ENCODE measurements at regions of chr19 and their contacts with region 1.

Region 1: DNA sequence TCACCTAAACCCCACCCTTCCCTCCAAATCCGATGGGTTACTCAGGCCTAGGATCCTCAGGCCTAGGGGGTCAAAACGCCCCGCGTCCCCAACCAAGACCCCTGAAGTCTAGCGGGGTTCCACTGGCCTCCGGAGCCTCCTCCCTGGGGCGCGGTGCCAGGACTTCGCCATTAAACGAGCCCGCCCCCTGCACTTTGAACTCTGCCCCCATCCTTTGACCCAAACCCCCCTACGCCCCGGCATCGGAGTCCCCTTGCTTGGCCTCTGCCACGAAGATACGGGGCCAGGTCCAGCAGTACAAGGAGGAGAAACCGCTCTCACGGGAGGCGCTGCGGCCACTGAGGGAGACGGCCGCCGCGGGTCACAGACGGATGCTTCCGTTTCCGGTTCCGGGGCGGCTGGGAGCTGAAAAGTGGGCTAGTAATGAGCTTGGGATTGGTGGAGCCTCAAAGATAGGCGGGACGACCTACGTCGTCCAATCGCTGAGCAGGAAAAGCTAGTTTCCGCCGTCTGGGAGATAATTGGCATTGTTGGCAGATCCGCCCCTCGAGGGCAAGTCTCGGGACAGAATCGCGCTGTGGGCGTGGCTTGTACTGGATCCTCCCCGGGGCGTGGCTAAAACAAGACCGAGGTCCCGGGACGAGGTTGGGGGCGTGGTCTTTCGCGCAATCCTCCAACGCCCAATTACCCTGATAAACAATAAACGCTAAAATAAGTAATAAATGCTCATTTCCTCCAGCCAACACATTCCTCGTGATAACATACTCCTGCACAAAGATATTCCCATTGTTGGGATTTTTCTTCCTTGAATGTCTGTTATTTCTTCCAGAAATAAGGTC is 5.7 kb upstream of the ZNF77 start:
- DNase-seq: peak; percentile 94
- H3K4me3 ChIP-seq: peak overlapping the region; percentile 73 to 90
- H3K27ac ChIP-seq: peak overlapping the region; percentile 79 to 96
- H3K4me1 ChIP-seq: peaks cover 4 to 9% of the 10 kb centered on the region in 2 experiments; a peak in 2 of 4 replicates
- H3K27me3 ChIP-seq: no peaks in the 10 kb centered on the region
- CTCF ChIP-seq: no peak
- EP300 ChIP-seq: no peak
- RAD21 ChIP-seq: no peak

Region 2: DNA sequence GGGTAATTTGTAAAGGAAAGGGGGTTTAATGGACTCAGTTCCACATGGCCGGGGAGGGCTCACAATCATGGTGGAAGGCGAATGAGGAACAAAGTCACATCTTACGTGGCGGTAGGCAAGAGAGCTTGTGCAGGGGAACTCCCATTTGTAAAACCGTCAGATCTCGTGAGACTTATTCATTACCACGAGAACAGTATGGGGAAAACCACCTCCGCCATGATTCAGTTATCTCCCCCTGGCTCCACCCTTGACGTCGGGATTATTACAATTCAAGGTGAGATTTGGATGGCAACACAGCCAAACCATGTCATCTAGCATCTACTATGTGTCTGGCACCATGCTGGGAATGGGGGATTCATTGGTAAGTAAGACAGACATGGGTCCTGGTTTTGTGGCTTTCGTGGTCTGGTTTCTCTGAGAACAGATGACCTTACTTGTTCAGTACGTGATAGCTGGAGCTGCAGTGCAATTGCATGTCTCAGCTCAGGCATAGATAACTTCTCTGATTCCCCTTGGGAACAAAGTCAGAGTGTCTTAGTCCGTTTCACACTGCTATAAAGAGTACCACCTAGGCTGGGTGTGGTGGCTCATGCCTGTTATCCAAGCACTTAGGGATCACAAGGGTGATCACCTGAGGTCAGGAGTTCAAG is 122.5 kb before region 1 on chr19:
- CTCF ChIA-PET with region 1: no interaction called
- POLR2A ChIA-PET with region 1: no interaction called
- DNase-seq: no peak
- H3K4me3 ChIP-seq: no peak overlapping the region
- H3K27ac ChIP-seq: no peak overlapping the region
- H3K4me1 ChIP-seq: no peaks in the 10 kb centered on the region
- H3K27me3 ChIP-seq: no peaks in the 10 kb centered on the region
- CTCF ChIP-seq: no peak
- EP300 ChIP-seq: no peak
- RAD21 ChIP-seq: no peak

Region 3: GRCh38 chr19:2887391-2887914 is 63.1 kb before region 1 on chr19:
- CTCF ChIA-PET with region 1: interaction called, 25 read pairs
- POLR2A ChIA-PET with region 1: interaction called, 8 read pairs
- DNase-seq: peak; percentile 78
- H3K4me3 ChIP-seq: no peak overlapping the region
- H3K27ac ChIP-seq: no peak overlapping the region
- H3K4me1 ChIP-seq: peaks cover 0 to 3% of the 10 kb centered on the region in 2 experiments; a peak in 1 of 4 replicates
- H3K27me3 ChIP-seq: no peaks in the 10 kb centered on the region
- CTCF ChIP-seq: peak; percentile 70
- EP300 ChIP-seq: no peak
- RAD21 ChIP-seq: peak; percentile 70

Region 4: DNA sequence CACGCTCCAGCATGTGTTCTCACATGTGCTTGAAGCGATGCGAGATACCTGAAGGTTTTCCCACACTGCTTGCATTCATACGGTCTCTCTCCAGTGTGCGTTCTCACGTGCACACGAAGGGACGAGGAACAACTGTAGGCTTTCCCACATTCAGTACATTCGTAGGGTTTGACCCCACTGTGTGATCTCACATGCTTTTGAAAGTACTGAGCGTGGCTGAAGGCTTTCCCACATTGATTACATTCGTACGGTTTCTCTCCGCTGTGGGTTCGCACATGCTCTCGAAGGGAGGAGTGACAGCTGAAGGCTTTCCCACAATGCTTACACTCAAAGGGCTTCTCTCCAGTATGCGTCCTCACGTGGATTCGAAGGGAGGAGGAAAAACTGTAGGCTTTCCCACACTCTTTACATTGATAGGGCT is 17.0 kb before region 1 on chr19:
- CTCF ChIA-PET with region 1: no interaction called
- POLR2A ChIA-PET with region 1: no interaction called
- DNase-seq: no peak
- H3K4me3 ChIP-seq: peak overlapping the region in 1 of 2 experiments; percentile 4; a peak in 1 of 4 replicates
- H3K27ac ChIP-seq: no peak overlapping the region
- H3K4me1 ChIP-seq: no peaks in the 10 kb centered on the region
- H3K27me3 ChIP-seq: no peaks in the 10 kb centered on the region
- CTCF ChIP-seq: no peak
- EP300 ChIP-seq: no peak
- RAD21 ChIP-seq: no peak

Region 5: DNA sequence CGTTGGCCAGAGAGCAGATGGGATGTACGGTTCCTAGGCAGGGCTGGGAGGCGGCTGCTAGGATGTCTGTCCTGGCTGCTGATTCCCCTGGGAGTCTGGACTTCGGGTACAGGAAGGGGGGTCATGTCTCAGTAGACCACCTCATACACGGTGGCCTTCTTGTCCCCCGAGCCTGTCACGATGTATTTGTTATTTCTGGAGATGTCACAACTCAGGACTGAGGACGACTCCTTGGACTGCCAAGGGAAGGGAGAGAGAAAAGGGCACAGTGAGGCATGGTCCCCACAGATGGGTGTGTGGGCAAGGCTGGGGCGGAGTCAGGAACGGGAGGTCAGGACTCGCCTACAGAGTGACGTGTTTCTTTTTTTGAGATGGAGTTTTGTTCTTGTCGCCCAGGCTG is 47.2 kb after region 1 on chr19:
- CTCF ChIA-PET with region 1: no interaction called
- POLR2A ChIA-PET with region 1: no interaction called
- DNase-seq: no peak
- H3K4me3 ChIP-seq: no peak overlapping the region
- H3K27ac ChIP-seq: no peak overlapping the region
- H3K4me1 ChIP-seq: no peaks in the 10 kb centered on the region; a peak in 1 of 4 replicates
- H3K27me3 ChIP-seq: no peaks in the 10 kb centered on the region
- CTCF ChIP-seq: no peak
- EP300 ChIP-seq: no peak
- RAD21 ChIP-seq: no peak

Region 6: DNA sequence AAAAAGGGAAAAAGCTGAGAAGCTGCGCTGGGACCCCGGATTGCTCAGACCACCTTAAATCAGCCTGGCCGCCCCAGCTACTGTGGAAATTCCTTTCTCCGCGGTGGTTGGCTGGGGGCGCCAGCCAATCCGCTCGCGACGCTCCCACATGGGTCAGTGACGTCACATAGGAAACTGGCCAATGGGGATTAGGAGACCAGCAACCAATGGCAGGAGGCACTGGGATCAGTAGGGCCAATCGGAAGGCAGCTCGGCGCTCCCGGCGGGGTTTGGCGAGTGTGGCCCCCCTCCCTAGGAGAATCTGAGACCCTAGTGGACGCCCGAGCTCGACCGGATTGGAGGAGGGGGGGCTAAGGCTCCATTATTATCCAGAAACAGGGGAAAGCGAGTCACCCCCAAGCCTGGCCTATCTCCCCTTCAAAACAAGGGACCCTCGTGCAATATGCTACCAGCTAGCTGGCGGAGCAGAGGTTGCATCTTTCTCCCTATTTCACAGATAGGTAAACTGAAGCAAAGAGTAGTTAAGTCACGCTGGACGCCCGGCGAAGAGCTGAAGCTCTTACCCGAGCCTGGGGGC is 85.1 kb after region 1 on chr19:
- CTCF ChIA-PET with region 1: interaction called, 13 read pairs
- POLR2A ChIA-PET with region 1: interaction called, 4 read pairs
- DNase-seq: peak; percentile 98
- H3K4me3 ChIP-seq: peak overlapping the region; percentile 49 to 69
- H3K27ac ChIP-seq: peak overlapping the region; percentile 74 to 83
- H3K4me1 ChIP-seq: peaks cover 0 to 14% of the 10 kb centered on the region in 2 experiments; a peak in 1 of 4 replicates
- H3K27me3 ChIP-seq: peaks cover 31% of the 10 kb centered on the region
- CTCF ChIP-seq: no peak
- EP300 ChIP-seq: peak; percentile 22 to 25; a peak in 1 of 4 replicates
- RAD21 ChIP-seq: no peak

Region 7: DNA sequence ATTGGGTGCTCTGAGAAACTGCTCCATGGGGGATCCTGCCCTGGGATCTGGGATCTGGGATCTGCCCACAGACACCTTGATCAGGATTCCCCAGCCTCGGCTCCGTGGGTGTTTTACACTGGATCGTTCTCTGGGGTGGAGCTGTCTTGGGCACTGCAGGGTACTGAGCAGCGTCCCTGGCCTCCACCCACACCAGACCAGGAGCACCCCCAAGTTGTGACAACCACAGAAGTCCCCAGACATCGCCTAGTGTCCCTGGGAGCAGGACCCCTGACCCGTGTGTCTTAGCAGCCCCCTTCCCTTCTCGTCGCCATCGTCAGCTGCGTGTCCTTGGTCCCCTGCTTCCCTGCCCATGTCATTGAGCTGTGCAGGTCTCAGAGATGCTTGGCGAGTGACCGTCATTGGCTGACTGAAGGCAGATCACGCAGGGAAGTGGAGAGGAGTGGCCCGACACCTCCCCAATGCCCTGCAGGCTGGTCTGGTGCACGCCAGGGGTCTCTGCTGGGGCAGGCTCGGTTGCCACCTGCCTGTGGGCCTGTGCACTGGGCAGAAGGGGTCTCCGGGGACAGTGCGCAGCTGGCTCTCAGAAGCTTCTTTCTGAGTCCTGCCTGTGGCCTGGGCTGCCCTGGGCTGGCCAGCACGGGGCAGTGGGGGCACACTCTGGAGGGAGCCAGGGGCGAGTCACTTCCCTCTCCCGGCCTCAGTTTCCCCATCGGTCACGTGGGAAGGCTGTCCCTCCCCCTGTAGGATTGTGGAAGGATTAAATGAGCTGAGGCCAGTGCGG is 149.8 kb after region 1 on chr19:
- CTCF ChIA-PET with region 1: interaction called, 18 read pairs
- POLR2A ChIA-PET with region 1: interaction called, 3 read pairs
- DNase-seq: no peak
- H3K4me3 ChIP-seq: no peak overlapping the region
- H3K27ac ChIP-seq: no peak overlapping the region
- H3K4me1 ChIP-seq: peaks cover 0 to 23% of the 10 kb centered on the region in 2 experiments; a peak in 1 of 4 replicates
- H3K27me3 ChIP-seq: no peaks in the 10 kb centered on the region
- CTCF ChIP-seq: no peak
- EP300 ChIP-seq: no peak
- RAD21 ChIP-seq: no peak

Region 8: GRCh38 chr19:3125900-3126524 is 175.5 kb after region 1 on chr19:
- CTCF ChIA-PET with region 1: interaction called, 60 read pairs
- POLR2A ChIA-PET with region 1: interaction called, 3 read pairs
- DNase-seq: peak; percentile 87
- H3K4me3 ChIP-seq: peak overlapping the region in 1 of 2 experiments; percentile 6; a peak in 1 of 4 replicates
- H3K27ac ChIP-seq: no peak overlapping the region
- H3K4me1 ChIP-seq: no peaks in the 10 kb centered on the region
- H3K27me3 ChIP-seq: no peaks in the 10 kb centered on the region
- CTCF ChIP-seq: peak; percentile 84
- EP300 ChIP-seq: no peak
- RAD21 ChIP-seq: peak; percentile 47

Region 9: DNA sequence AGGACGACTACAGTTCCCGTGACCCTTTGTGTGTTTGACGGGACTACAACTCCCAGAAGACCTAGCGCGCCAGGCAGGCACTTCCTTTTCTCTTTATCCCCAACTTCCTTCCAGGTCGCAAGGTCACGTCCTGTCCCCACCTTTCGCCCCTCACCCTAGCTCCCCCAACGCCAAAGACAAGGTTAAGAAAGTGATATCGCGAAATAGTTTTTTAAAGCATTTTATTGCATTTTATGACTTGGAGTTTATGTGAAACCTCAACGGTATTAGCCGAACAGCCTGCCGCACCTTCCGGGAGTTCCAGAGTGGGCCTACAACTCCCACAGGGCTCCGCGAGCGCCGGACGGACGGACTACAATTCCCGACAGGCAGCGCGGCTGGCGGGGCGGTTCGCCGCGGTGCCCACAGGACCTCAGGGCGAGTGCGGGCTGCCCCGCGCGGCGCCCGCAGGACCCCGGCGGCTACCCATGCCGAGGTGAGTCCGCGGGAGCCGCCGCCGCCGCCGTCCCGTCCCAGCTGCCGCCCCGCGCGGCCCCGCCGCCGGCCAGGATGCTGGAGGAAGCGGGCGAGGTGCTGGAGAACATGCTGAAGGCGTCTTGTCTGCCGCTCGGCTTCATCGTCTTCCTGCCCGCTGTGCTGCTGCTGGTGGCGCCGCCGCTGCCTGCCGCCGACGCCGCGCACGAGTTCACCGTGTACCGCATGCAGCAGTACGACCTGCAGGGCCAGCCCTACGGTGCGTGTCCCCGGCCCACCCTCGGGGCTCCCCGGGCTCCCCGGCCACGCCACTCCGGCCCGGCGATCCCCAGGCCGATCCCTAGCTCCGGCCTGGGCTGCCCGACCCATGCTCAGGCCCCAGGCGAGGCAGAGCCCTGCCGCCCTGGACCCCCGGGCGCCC is 235.2 kb after region 1 on chr19 and contains the start of gene NCLN:
- CTCF ChIA-PET with region 1: interaction called, 15 read pairs
- POLR2A ChIA-PET with region 1: no interaction called
- DNase-seq: peak; percentile 96
- H3K4me3 ChIP-seq: peak within 1 kb of the TSS; percentile 67 to 91
- H3K27ac ChIP-seq: peak within 1 kb of the TSS; percentile 76 to 87
- H3K4me1 ChIP-seq: peaks cover 10 to 19% of the 10 kb centered on the region in 2 experiments; a peak in 2 of 4 replicates
- H3K27me3 ChIP-seq: no peaks in the 10 kb centered on the region
- CTCF ChIP-seq: no peak
- EP300 ChIP-seq: no peak
- RAD21 ChIP-seq: no peak
- polyA plus RNA-seq, gene NCLN: 67.0 and 69.0 TPM in 2 replicates